CD8-positive, alpha-beta T cell (primary cell): ENCODE measurements at regions of chr16 and their contacts with region 1.

Region 1: DNA sequence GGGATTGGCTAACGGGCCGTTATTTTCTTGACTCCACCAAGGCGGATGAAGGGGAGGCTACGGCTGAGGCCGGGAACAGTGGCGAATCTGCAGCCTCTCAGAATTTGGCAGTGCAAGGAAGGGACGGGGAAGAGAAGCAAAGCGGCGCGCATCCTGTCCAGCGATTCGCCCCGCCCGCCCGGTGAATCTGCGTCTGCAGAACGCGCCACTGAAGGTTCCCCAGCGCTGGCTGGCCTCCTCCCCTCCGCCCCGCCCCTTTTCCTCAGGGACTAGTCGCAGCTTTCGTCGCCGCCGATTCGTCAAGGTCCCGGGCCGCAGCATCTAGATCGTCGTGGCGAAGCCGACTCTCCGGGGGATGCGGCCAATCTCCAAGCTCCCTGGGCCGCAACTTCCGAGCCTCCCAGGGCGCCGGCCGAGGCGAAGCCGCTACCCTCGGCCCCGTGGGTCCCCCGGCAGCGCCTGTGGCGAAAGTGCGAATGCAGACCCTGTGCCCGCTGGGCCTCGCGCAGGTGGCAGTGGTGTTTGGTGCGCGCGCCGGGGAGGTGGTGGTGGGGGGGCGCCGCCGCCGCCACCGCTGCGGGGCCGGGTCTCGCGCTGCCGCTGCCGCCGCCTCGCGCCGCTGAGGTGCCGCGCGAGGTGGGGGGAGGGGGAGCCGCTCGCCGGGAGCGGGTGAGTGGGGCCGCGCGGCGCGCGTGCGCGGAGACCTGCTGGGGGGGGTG is at the start of gene SETD1A:
- DNase-seq: peak; percentile 91 to 99 (median 98)
- ATAC-seq: peak; percentile 86
- H3K4me3 ChIP-seq: peak within 1 kb of the TSS; percentile 88 to 97
- H3K4me3 Mint-ChIP-seq: peak within 1 kb of the TSS; percentile 95
- H3K27ac ChIP-seq: peak within 1 kb of the TSS; percentile 93 to 98
- H3K27ac Mint-ChIP-seq: peak within 1 kb of the TSS; percentile 98
- H3K4me1 ChIP-seq: peaks cover 27% of the 10 kb centered on the region
- H3K4me1 Mint-ChIP-seq: peaks cover 31% of the 10 kb centered on the region
- H3K27me3 ChIP-seq: no peaks in the 10 kb centered on the region
- H3K27me3 Mint-ChIP-seq: no peaks in the 10 kb centered on the region
- CTCF ChIP-seq: no peak
- total RNA-seq, gene SETD1A: 43.6 to 48.3 TPM

Region 2: GRCh38 chr16:30893744-30894539 is 63.7 kb before region 1 on chr16 and contains the start of gene BCL7C:
- CTCF ChIA-PET with region 1: no interaction called
- POLR2A ChIA-PET with region 1: no interaction called
- intact Hi-C with region 1: loop called (anchors 2 kb)
- DNase-seq: peak; percentile 33 to 88 (median 78)
- ATAC-seq: peak; percentile 73
- H3K4me3 ChIP-seq: peak within 1 kb of the TSS; percentile 72 to 85
- H3K4me3 Mint-ChIP-seq: peak within 1 kb of the TSS; percentile 88
- H3K27ac ChIP-seq: peak within 1 kb of the TSS; percentile 45 to 83
- H3K27ac Mint-ChIP-seq: peak within 1 kb of the TSS; percentile 92
- H3K4me1 ChIP-seq: peaks cover 33% of the 10 kb centered on the region
- H3K4me1 Mint-ChIP-seq: peaks cover 43% of the 10 kb centered on the region
- H3K27me3 ChIP-seq: no peaks in the 10 kb centered on the region
- H3K27me3 Mint-ChIP-seq: no peaks in the 10 kb centered on the region
- CTCF ChIP-seq: no peak
- total RNA-seq, gene BCL7C: 16.0 to 16.2 TPM

Region 3: DNA sequence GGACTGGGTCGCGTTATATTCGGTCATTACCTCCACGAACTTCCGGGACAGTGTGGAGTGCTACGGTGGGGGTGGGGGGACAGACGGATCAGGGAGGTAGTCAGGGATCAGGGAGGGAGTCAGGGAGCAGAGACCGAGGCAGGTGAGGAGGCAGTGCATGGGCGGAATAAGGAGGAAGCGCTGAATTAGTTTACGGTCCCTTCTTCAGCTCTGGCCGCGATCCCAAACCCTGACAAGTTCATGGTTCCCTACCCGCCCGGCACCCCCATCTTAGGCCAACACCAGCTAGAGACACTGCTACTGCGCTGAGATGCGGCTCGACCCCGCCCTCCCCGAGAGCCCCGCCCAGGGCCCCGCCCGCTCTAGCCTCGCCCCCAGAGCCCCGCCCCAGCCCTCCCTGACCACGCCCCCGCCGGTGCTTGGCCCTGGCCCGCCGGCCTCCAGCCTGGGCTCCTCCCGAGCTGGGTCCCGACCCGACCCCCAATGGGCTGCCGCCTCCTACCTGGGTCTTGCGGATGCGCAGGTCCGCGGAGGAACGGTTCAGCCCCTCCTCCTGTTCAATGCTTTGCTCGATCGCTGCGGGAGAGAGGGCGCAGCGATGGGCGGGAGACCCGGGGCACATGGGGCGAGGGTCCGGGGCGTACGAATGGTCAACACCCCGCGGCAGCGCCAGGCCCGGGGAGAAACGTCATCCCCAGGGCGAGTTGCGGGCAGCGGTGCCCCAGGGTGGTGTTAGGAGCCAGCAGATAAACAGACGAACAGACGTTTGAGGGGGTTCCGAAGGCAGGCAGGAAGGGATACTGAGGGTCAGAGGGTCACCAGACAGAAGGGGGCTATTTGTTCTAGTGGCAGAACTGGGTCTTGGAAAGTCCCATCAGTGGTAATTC is 39.6 kb after region 1 on chr16:
- CTCF ChIA-PET with region 1: interaction called, 3 read pairs
- POLR2A ChIA-PET with region 1: interaction called, 4 read pairs
- intact Hi-C with region 1: loop called in 1 of 2 experiments (anchors 2 kb)
- DNase-seq: peak; percentile 67 to 88 (median 80)
- ATAC-seq: peak; percentile 99
- H3K4me3 ChIP-seq: peak overlapping the region; percentile 61 to 93
- H3K4me3 Mint-ChIP-seq: peak overlapping the region; percentile 85
- H3K27ac ChIP-seq: peak overlapping the region; percentile 40 to 55
- H3K27ac Mint-ChIP-seq: peak overlapping the region; percentile 90
- H3K4me1 ChIP-seq: peaks cover 11% of the 10 kb centered on the region
- H3K4me1 Mint-ChIP-seq: peaks cover 10% of the 10 kb centered on the region
- H3K27me3 ChIP-seq: no peaks in the 10 kb centered on the region
- H3K27me3 Mint-ChIP-seq: no peaks in the 10 kb centered on the region
- CTCF ChIP-seq: no peak

Region 4: GRCh38 chr16:31094424-31095120 is 137.0 kb after region 1 on chr16 and contains the start of gene VKORC1:
- CTCF ChIA-PET with region 1: no interaction called
- POLR2A ChIA-PET with region 1: no interaction called
- intact Hi-C with region 1: loop called (anchors 1 kb)
- DNase-seq: peak; percentile 65 to 93 (median 85)
- ATAC-seq: peak; percentile 86
- H3K4me3 ChIP-seq: peak within 1 kb of the TSS; percentile 72 to 91
- H3K4me3 Mint-ChIP-seq: peak within 1 kb of the TSS; percentile 93
- H3K27ac ChIP-seq: peak within 1 kb of the TSS; percentile 69 to 74
- H3K27ac Mint-ChIP-seq: peak within 1 kb of the TSS; percentile 91
- H3K4me1 ChIP-seq: peaks cover 19% of the 10 kb centered on the region
- H3K4me1 Mint-ChIP-seq: peaks cover 25% of the 10 kb centered on the region
- H3K27me3 ChIP-seq: no peaks in the 10 kb centered on the region
- H3K27me3 Mint-ChIP-seq: no peaks in the 10 kb centered on the region
- CTCF ChIP-seq: no peak
- total RNA-seq, gene VKORC1: 23.0 to 27.2 TPM

Region 5: DNA sequence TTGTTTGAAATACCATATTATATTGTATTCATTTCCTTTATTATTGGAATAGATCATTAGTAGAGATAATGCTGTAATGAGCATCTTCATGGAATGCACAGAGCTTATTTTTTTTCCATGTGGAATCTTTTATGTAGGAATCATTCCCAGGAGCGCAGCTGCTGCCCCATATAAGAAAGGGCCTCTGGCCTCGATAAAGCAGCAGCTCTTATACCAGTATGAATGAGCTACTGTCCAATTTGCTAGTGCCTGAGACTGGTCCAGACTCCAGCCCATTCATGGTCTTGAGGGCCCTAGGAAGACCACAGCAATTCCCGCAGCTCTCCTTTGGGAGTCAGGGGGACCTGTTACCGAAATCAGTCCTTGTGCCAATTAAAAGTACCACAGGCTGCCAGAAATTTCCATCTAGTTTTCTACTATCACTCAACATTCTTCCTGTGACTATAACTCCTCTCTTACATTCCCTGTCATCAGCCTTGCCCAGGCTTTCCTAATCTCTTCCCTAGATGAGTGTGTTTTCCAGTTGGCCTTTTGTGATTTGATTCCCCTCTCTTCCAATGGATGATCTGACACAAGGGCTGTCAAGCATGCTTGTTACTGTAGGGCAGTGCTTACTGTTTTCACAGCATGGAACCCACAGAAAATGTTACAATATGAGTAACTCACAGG is 483.0 kb after region 1 on chr16:
- CTCF ChIA-PET with region 1: interaction called, 5 read pairs
- POLR2A ChIA-PET with region 1: no interaction called
- intact Hi-C with region 1: loop called in 1 of 2 experiments (anchors 1 kb)
- DNase-seq: no peak
- ATAC-seq: no peak
- H3K4me3 ChIP-seq: no peak overlapping the region
- H3K4me3 Mint-ChIP-seq: no peak overlapping the region
- H3K27ac ChIP-seq: no peak overlapping the region
- H3K27ac Mint-ChIP-seq: no peak overlapping the region
- H3K4me1 ChIP-seq: peaks cover 4% of the 10 kb centered on the region
- H3K4me1 Mint-ChIP-seq: peaks cover 6% of the 10 kb centered on the region
- H3K27me3 ChIP-seq: no peaks in the 10 kb centered on the region
- H3K27me3 Mint-ChIP-seq: no peaks in the 10 kb centered on the region
- CTCF ChIP-seq: no peak